Prostate gland (tissue), 2 donors: ENCODE measurements at regions of chr6 and their contacts with region 1.

Region 1: GRCh38 chr6:129498950-129499842 is 210.8 kb downstream of the ARHGAP18 start:
- DNase-seq: peak; percentile 36
- H3K4me3 ChIP-seq: no peak overlapping the region
- H3K27ac ChIP-seq: peak overlapping the region in 1 of 2 donors; percentile 24
- H3K4me1 ChIP-seq: no peaks in the 10 kb centered on the region
- H3K27me3 ChIP-seq: no peaks in the 10 kb centered on the region
- CTCF ChIP-seq: peak; percentile 26 to 77 (median 72)
- POLR2A ChIP-seq: no peak

Region 2: GRCh38 chr6:129539032-129539431 is 39.8 kb after region 1 on chr6:
- intact Hi-C with region 1: no loop called
- DNase-seq: no peak
- H3K4me3 ChIP-seq: no peak overlapping the region
- H3K27ac ChIP-seq: no peak overlapping the region
- H3K4me1 ChIP-seq: no peaks in the 10 kb centered on the region
- H3K27me3 ChIP-seq: no peaks in the 10 kb centered on the region
- CTCF ChIP-seq: no peak
- POLR2A ChIP-seq: no peak

Region 3: GRCh38 chr6:129575378-129576118 is 76.4 kb after region 1 on chr6:
- intact Hi-C with region 1: loop called (anchors 2 kb)
- DNase-seq: peak; percentile 12
- H3K4me3 ChIP-seq: no peak overlapping the region
- H3K27ac ChIP-seq: no peak overlapping the region
- H3K4me1 ChIP-seq: no peaks in the 10 kb centered on the region
- H3K27me3 ChIP-seq: no peaks in the 10 kb centered on the region
- CTCF ChIP-seq: peak; percentile 19 to 72 (median 66)
- POLR2A ChIP-seq: no peak

Region 4: GRCh38 chr6:129785047-129785755 is 286.0 kb after region 1 on chr6:
- intact Hi-C with region 1: no loop called
- DNase-seq: no peak
- H3K4me3 ChIP-seq: no peak overlapping the region
- H3K27ac ChIP-seq: no peak overlapping the region
- H3K4me1 ChIP-seq: no peaks in the 10 kb centered on the region
- H3K27me3 ChIP-seq: no peaks in the 10 kb centered on the region
- CTCF ChIP-seq: no peak
- POLR2A ChIP-seq: no peak

Region 5: DNA sequence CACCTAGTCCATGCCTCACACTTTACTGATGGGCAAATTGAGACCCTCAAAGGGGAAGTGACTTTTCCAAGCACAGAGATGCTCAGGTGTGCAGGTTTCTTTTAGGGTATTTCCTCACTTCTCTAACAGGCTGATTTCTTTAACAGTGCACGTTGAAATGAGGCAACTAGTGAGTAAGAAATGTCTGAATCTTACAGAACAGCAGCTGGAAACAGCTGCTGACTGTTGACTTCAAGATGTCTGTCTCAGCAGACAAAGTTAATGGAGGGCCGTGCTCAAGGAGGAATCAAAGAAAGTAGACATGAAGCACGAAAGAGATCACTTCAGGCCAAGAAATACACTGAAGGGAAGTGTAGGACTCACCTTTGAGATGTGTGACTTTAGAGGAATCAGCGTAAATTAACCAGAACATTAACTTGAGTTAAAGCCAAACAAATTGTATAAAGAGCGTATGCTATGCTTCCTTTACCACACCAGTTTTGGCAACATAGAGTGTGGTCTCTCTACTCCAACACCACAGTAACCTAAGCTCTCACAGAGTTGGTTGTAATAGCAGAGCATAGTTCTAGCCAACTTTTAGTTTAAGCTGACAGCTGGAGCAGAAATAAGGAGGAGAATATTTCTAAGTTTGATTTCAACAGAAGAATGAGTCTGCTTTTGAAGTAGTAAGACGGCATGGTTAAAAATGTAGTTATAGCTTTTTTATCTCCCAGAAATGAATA is 662.6 kb after region 1 on chr6:
- intact Hi-C with region 1: no loop called
- DNase-seq: no peak
- H3K4me3 ChIP-seq: no peak overlapping the region
- H3K27ac ChIP-seq: no peak overlapping the region
- H3K4me1 ChIP-seq: no peaks in the 10 kb centered on the region
- H3K27me3 ChIP-seq: no peaks in the 10 kb centered on the region
- CTCF ChIP-seq: no peak
- POLR2A ChIP-seq: no peak